Naive thymus-derived CD4-positive, alpha-beta T cell (primary cell): ENCODE measurements at regions of chr12 and their contacts with region 1.

Region 1: GRCh38 chr12:56630160-56630632 is at the start of gene BAZ2A:
- DNase-seq: peak; percentile 71 to 87 (median 82)
- ATAC-seq: peak; percentile 88
- H3K4me3 ChIP-seq: peak within 1 kb of the TSS; percentile 99
- H3K4me3 Mint-ChIP-seq: peak within 1 kb of the TSS; percentile 85 to 99 (median 91)
- H3K27ac ChIP-seq: peak within 1 kb of the TSS; percentile 99
- H3K27ac Mint-ChIP-seq: peak within 1 kb of the TSS; percentile 93 to 99 (median 95)
- H3K4me1 ChIP-seq: peaks cover 45 to 51% of the 10 kb centered on the region in 2 donors
- H3K4me1 Mint-ChIP-seq: peaks cover 55 to 86% (median 74%) of the 10 kb centered on the region in 7 donors
- H3K27me3 ChIP-seq: no peaks in the 10 kb centered on the region
- H3K27me3 Mint-ChIP-seq: no peaks in the 10 kb centered on the region
- total RNA-seq, gene BAZ2A: 127 to 230 (median 191) TPM

Region 2: GRCh38 chr12:56521590-56522371 is 108.4 kb before region 1 on chr12 and contains the start of gene RBMS2:
- CTCF ChIA-PET with region 1: no interaction called
- POLR2A ChIA-PET with region 1: interaction called, 4 read pairs
- intact Hi-C with region 1: loop called in 1 of 2 experiments (anchors 2 kb)
- DNase-seq: peak in 8 of 9 donors; percentile 23 to 74 (median 58)
- ATAC-seq: peak; percentile 97
- H3K4me3 ChIP-seq: peak within 1 kb of the TSS; percentile 44
- H3K4me3 Mint-ChIP-seq: peak within 1 kb of the TSS; percentile 79 to 98 (median 91)
- H3K27ac ChIP-seq: peak within 1 kb of the TSS; percentile 70
- H3K27ac Mint-ChIP-seq: peak within 1 kb of the TSS; percentile 60 to 97 (median 82)
- H3K4me1 ChIP-seq: peaks cover 6 to 23% of the 10 kb centered on the region in 2 donors
- H3K4me1 Mint-ChIP-seq: peaks cover 25 to 40% (median 37%) of the 10 kb centered on the region in 7 donors
- H3K27me3 ChIP-seq: no peaks in the 10 kb centered on the region
- H3K27me3 Mint-ChIP-seq: peaks cover 0 to 2% (median 0%) of the 10 kb centered on the region in 5 donors
- total RNA-seq, gene RBMS2: 2.5 to 12.8 (median 5.5) TPM

Region 3: DNA sequence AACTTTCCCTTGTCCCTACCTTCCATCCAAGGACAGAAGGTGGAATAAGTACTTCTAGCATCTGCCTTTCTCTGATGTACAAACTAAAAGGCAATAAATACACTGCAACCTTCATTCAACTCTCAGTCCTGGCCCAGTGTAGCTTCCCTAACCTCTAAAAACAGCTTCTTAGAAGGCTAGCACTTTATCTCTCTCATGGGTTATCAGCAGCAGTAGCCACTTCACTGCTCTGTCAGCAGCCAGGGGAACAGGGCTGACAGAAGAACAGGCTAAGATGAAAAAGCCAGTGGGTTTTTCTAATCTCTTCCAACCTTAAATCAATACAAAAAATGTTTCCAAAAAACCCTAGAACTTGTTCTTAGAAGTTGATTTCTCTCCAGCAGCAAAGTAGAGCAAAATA is 13.3 kb before region 1 on chr12:
- CTCF ChIA-PET with region 1: interaction called, 6 read pairs
- POLR2A ChIA-PET with region 1: interaction called, 17 read pairs
- intact Hi-C with region 1: loop called in 1 of 2 experiments (anchors 2 kb)
- DNase-seq: no peak
- ATAC-seq: no peak
- H3K4me3 ChIP-seq: no peak overlapping the region
- H3K4me3 Mint-ChIP-seq: no peak overlapping the region
- H3K27ac ChIP-seq: no peak overlapping the region
- H3K27ac Mint-ChIP-seq: peak overlapping the region in 3 of 9 donors; percentile 1 to 3 (median 2)
- H3K4me1 ChIP-seq: peaks cover 0 to 4% of the 10 kb centered on the region in 2 donors
- H3K4me1 Mint-ChIP-seq: peaks cover 14 to 40% (median 30%) of the 10 kb centered on the region in 7 donors
- H3K27me3 ChIP-seq: no peaks in the 10 kb centered on the region
- H3K27me3 Mint-ChIP-seq: no peaks in the 10 kb centered on the region

Region 4: DNA sequence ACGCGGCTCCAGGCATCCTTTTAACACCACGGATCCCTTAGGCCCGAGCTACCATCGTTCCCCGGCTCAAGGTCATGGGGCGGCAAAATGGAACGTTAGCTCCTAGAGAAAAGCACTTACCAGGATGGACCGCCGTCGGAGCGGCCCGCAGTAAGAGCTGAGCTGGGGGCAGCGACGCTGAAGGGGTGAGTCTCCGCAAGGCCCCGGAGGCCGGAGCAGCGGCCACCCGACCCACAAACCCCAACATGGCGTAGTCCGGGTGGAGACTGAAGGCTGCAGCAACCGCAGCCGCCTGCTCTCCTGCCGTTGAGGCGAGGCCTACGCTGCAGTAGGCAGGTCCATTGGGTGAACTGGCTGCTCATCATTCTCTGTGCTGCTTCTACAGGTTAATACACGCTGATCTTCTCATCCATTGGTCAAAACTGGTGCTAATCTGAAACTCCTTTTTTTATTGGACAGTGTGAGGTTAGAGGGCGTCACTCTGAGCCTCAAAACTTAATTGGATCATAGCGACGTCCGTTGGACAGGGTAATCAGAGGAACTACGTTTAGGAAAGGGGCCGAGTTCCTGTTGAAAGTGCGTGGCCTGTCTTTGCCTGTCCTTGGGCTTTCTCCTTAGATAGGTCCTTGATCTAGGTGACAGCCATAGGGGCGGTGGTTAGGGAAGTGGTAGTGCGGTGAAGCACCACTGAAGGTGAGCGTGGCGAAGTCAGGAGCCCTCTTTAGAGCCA is 15.7 kb after region 1 on chr12 and contains the start of gene ATP5F1B:
- CTCF ChIA-PET with region 1: interaction called, 5 read pairs
- POLR2A ChIA-PET with region 1: interaction called, 88 read pairs
- intact Hi-C with region 1: loop called (anchors 1 kb)
- DNase-seq: peak; percentile 65 to 97 (median 93)
- ATAC-seq: peak; percentile 97
- H3K4me3 ChIP-seq: peak within 1 kb of the TSS; percentile 83
- H3K4me3 Mint-ChIP-seq: peak within 1 kb of the TSS; percentile 82 to 98 (median 94)
- H3K27ac ChIP-seq: peak within 1 kb of the TSS; percentile 93
- H3K27ac Mint-ChIP-seq: peak within 1 kb of the TSS; percentile 97 to 100 (median 99)
- H3K4me1 ChIP-seq: peaks cover 4 to 21% of the 10 kb centered on the region in 2 donors
- H3K4me1 Mint-ChIP-seq: peaks cover 17 to 39% (median 34%) of the 10 kb centered on the region in 7 donors
- H3K27me3 ChIP-seq: no peaks in the 10 kb centered on the region
- H3K27me3 Mint-ChIP-seq: no peaks in the 10 kb centered on the region
- total RNA-seq, gene ATP5F1B: 217 to 476 (median 267) TPM

Region 5: DNA sequence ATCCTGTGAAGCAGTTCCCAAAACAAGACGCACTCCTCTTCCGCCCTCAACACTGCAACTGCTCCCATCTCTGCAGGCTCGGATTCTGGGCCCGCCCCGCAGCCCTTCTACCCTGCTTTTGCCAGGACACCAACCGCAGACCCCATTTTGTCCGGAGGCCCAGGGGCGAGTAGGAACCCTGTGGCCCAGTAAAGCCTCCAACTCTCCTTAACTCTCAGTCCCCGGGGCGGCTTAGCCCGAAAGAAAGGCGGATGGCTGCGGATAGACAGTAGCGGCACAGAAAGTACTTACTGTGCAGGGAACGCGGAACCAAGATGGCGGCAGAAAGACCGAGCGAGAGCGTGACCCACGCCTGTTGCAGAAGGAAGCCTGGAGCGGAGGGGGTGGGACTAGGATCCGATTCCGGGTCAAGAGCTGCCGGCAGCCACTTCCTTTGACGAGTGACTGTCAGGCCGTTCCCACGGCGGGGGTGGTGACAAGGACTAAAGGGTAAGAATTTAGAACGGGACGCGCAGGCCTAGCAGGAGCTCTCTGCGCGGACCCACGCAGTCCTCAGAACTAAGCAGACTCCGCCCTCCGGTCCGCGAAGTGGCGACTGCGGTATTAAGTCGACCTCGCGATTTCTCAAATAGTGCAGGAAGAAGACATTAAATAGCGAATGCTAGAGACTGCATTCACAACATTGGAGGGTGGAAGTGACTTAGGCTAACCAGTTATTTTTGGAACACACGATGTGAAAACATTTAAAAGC is 95.0 kb after region 1 on chr12 and contains the start of gene NACA:
- CTCF ChIA-PET with region 1: interaction called, 5 read pairs
- POLR2A ChIA-PET with region 1: interaction called, 27 read pairs
- intact Hi-C with region 1: no loop called
- DNase-seq: peak; percentile 85 to 99 (median 96)
- ATAC-seq: peak; percentile 95
- H3K4me3 ChIP-seq: peak within 1 kb of the TSS; percentile 100
- H3K4me3 Mint-ChIP-seq: peak within 1 kb of the TSS; percentile 94 to 100 (median 97)
- H3K27ac ChIP-seq: peak within 1 kb of the TSS; percentile 87
- H3K27ac Mint-ChIP-seq: peak within 1 kb of the TSS; percentile 94 to 100 (median 98)
- H3K4me1 ChIP-seq: peaks cover 40 to 43% of the 10 kb centered on the region in 2 donors
- H3K4me1 Mint-ChIP-seq: peaks cover 39 to 53% (median 49%) of the 10 kb centered on the region in 7 donors
- H3K27me3 ChIP-seq: no peaks in the 10 kb centered on the region
- H3K27me3 Mint-ChIP-seq: no peaks in the 10 kb centered on the region
- total RNA-seq, gene NACA: 834 to 1,486 (median 1,355) TPM

Region 6: DNA sequence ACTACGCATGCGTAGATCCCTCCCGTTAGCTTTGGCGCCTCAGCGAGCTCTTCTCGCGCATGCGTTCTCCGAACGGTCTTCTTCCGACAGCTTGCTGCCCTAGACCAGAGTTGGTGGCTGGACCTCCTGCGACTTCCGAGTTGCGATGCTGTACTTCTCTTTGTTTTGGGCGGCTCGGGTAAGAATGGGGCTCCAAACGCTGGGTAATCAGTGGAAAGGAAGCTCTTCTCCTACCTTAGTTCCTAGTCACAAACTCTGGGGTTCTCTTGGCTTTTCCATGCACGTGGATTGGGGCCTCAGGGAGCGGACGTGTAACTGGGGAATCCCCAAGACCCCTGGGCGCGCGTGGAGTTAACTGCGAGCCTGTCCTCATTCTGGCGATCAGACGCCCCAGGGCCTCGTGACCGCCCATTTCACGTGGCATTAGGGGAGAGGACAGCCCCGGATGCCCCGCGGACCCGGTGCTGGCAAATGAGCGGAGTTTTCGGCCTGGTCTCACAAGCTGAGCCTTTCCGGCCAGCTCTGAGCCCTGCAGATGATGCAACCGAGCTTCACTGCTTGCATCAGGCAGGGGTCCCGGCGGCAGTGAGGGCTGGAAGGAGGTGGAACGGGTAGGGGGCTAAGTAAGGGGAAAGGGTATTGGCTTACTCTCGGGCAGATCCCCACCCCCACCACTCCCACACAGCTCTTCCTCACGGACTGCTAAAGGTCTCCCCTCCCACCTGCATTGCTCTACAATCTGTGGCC is 599.6 kb after region 1 on chr12 and contains the start of gene SHMT2:
- CTCF ChIA-PET with region 1: no interaction called
- POLR2A ChIA-PET with region 1: no interaction called
- intact Hi-C with region 1: loop called in 1 of 2 experiments (anchors 5 kb)
- DNase-seq: peak; percentile 73 to 92 (median 88)
- ATAC-seq: peak; percentile 62
- H3K4me3 ChIP-seq: peak within 1 kb of the TSS; percentile 82
- H3K4me3 Mint-ChIP-seq: peak within 1 kb of the TSS; percentile 88 to 99 (median 92)
- H3K27ac ChIP-seq: peak within 1 kb of the TSS; percentile 69
- H3K27ac Mint-ChIP-seq: peak within 1 kb of the TSS; percentile 3 to 95 (median 84)
- H3K4me1 ChIP-seq: peaks cover 21 to 46% of the 10 kb centered on the region in 2 donors
- H3K4me1 Mint-ChIP-seq: peaks cover 38 to 66% (median 55%) of the 10 kb centered on the region in 7 donors
- H3K27me3 ChIP-seq: peaks cover 6 to 12% of the 10 kb centered on the region in 2 donors
- H3K27me3 Mint-ChIP-seq: peaks cover 11 to 28% (median 23%) of the 10 kb centered on the region in 5 donors
- total RNA-seq, gene SHMT2: 21.7 to 175 (median 36.1) TPM

Region 7: DNA sequence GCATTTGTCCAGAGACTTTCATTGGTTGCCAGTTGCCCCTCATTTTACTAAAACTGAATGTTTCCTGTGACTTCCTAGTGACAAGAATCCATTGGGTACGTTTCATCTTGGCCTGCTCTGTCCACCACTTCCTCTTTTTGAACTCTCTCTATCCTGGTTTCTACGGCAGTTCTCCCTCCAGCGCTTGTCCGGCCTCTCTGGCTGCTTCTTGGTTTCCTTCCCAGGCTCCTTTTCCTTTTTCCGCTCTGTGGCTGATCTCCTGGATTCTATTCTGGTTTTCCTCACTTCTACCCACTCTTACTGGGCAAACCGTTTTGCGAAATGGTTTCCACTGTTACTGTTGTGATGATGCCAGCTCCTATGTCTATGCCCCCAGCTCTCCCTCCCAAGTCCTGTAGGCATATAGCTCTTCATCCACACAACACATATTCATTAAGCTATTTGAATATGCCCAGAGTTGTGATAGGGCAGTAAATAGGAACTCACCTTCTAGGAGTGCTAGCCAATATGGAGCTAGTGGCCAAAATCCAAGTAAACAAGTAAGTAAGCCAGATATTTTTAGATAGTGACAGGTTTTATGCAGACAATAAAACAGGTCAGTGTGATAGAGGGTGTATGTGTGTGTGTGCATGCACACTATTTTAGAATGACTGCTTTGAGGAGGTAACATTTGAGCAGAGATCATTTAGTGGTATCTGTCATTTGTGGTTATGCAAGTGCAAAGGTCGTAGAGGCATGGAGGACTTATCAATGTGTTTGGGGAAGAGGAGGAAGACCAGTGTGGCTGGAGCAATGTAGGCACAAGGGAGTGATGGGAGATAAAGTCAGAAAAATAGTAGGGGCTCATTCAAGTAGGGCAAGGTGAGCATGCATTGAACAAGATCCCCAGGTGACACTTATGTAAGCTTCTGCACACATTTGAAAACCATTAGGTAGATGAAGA is 1244.2 kb after region 1 on chr12:
- CTCF ChIA-PET with region 1: no interaction called
- POLR2A ChIA-PET with region 1: no interaction called
- intact Hi-C with region 1: no loop called
- DNase-seq: no peak
- ATAC-seq: peak; percentile 41
- H3K4me3 ChIP-seq: no peak overlapping the region
- H3K4me3 Mint-ChIP-seq: no peak overlapping the region
- H3K27ac ChIP-seq: no peak overlapping the region
- H3K27ac Mint-ChIP-seq: peak overlapping the region in 1 of 9 donors; percentile 23
- H3K4me1 ChIP-seq: no peaks in the 10 kb centered on the region
- H3K4me1 Mint-ChIP-seq: peaks cover 0 to 12% (median 3%) of the 10 kb centered on the region in 7 donors
- H3K27me3 ChIP-seq: no peaks in the 10 kb centered on the region
- H3K27me3 Mint-ChIP-seq: peaks cover 0 to 2% (median 0%) of the 10 kb centered on the region in 5 donors

Region 8: DNA sequence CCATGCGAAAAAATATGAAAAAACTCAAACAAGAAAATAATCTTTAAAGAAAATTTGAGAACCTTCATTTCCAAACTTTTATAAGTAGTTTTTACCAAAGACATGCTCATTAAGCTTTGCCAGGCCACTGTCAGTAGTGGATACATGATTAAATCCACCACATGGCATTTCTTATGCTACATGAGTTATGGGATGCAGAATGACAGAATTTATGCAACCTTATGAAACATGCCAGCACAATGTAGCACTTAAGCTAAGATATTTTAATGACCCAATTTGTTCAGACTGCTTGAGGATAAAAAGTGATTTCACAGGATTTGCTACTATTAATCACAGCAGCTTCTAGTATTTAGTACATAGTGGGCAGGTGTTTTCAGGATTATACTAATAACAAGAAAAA is 1434.5 kb after region 1 on chr12:
- CTCF ChIA-PET with region 1: no interaction called
- POLR2A ChIA-PET with region 1: no interaction called
- intact Hi-C with region 1: no loop called
- DNase-seq: no peak
- ATAC-seq: no peak
- H3K4me3 ChIP-seq: no peak overlapping the region
- H3K4me3 Mint-ChIP-seq: no peak overlapping the region
- H3K27ac ChIP-seq: no peak overlapping the region
- H3K27ac Mint-ChIP-seq: no peak overlapping the region
- H3K4me1 ChIP-seq: no peaks in the 10 kb centered on the region
- H3K4me1 Mint-ChIP-seq: no peaks in the 10 kb centered on the region
- H3K27me3 ChIP-seq: no peaks in the 10 kb centered on the region
- H3K27me3 Mint-ChIP-seq: peaks cover 0 to 9% (median 6%) of the 10 kb centered on the region in 5 donors